ENCODE measurements at regions of chr6 and their contacts with region 1.

Region 1: GRCh38 chr6:1609648-1610496 is at the start of gene FOXC1:
- DNase-seq: peak; percentile 89 to 93 (median 90)
- ATAC-seq: peak; percentile 84 to 92 (median 90)
- H3K4me3 ChIP-seq: peak within 1 kb of the TSS; percentile 53 to 89 (median 69)
- H3K27ac ChIP-seq: peak within 1 kb of the TSS; percentile 75 to 95 (median 88)
- H3K4me1 ChIP-seq: peaks cover 0 to 55% (median 6%) of the 10 kb centered on the region in 12 donors
- H3K27me3 ChIP-seq: peaks cover 28 to 90% (median 65%) of the 10 kb centered on the region in 9 donors
- CTCF ChIP-seq: no peak
- POLR2A ChIP-seq: peak in 1 of 2 donors; percentile 81
- total RNA-seq, gene FOXC1: 1.8 to 6.3 (median 3.5) TPM

Region 2: GRCh38 chr6:1004885-1005630 is 604.8 kb before region 1 on chr6:
- intact Hi-C with region 1: no loop called
- DNase-seq: no peak
- ATAC-seq: no peak
- H3K4me3 ChIP-seq: no peak overlapping the region
- H3K27ac ChIP-seq: no peak overlapping the region
- H3K4me1 ChIP-seq: no peaks in the 10 kb centered on the region
- H3K27me3 ChIP-seq: no peaks in the 10 kb centered on the region
- CTCF ChIP-seq: no peak
- POLR2A ChIP-seq: no peak

Region 3: GRCh38 chr6:1179571-1180459 is 430.1 kb before region 1 on chr6:
- intact Hi-C with region 1: no loop called
- DNase-seq: no peak
- ATAC-seq: no peak
- H3K4me3 ChIP-seq: no peak overlapping the region
- H3K27ac ChIP-seq: no peak overlapping the region
- H3K4me1 ChIP-seq: no peaks in the 10 kb centered on the region
- H3K27me3 ChIP-seq: peaks cover 0 to 20% (median under 1%) of the 10 kb centered on the region in 9 donors
- CTCF ChIP-seq: no peak
- POLR2A ChIP-seq: no peak

Region 4: DNA sequence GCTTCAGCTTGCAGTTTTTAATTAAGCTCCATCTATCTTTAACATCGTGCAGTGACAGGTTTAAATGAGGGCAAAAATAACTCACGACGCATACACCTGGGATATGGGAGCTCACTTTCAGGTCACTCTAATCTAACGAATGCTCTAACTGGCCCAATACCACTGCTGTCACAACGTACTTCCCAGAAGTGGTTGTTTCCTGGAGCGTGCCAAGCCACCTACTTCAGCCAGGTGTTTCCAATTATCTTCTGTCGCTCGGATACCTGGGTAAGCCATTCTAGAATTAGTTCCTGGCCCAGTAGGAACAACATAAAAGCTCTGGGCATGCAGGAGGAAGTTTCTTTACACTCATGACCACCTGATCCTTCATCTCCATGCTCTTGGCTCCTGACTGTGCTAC is 147.3 kb after region 1 on chr6:
- intact Hi-C with region 1: loop called in 1 of 10 experiments (anchors 5 kb)
- DNase-seq: no peak
- ATAC-seq: no peak
- H3K4me3 ChIP-seq: no peak overlapping the region
- H3K27ac ChIP-seq: peak overlapping the region in 2 of 12 donors; percentile 14 to 44
- H3K4me1 ChIP-seq: no peaks in the 10 kb centered on the region
- H3K27me3 ChIP-seq: no peaks in the 10 kb centered on the region
- CTCF ChIP-seq: no peak
- POLR2A ChIP-seq: no peak

Region 5: GRCh38 chr6:1832836-1833787 is 223.2 kb after region 1 on chr6:
- intact Hi-C with region 1: loop called in 2 of 10 experiments (anchors 10 kb)
- DNase-seq: peak; percentile 49 to 71 (median 60)
- ATAC-seq: peak; percentile 37 to 89 (median 78)
- H3K4me3 ChIP-seq: peak overlapping the region in 6 of 12 donors; percentile 12 to 33 (median 20)
- H3K27ac ChIP-seq: peak overlapping the region in 8 of 12 donors; percentile 2 to 34 (median 16)
- H3K4me1 ChIP-seq: peaks cover 0 to 25% (median 0%) of the 10 kb centered on the region in 12 donors
- H3K27me3 ChIP-seq: no peaks in the 10 kb centered on the region
- CTCF ChIP-seq: no peak
- POLR2A ChIP-seq: no peak

Region 6: GRCh38 chr6:2448820-2449571 is 839.1 kb after region 1 on chr6:
- intact Hi-C with region 1: loop called in 2 of 10 experiments (anchors 10 kb)
- DNase-seq: peak in 1 of 5 donors; percentile 30
- ATAC-seq: peak in 3 of 4 donors; percentile 69 to 73 (median 70)
- H3K4me3 ChIP-seq: peak overlapping the region in 1 of 12 donors; percentile 33
- H3K27ac ChIP-seq: no peak overlapping the region
- H3K4me1 ChIP-seq: peaks cover 0 to 12% (median 0%) of the 10 kb centered on the region in 12 donors
- H3K27me3 ChIP-seq: no peaks in the 10 kb centered on the region
- CTCF ChIP-seq: peak; percentile 29 to 72 (median 54)
- POLR2A ChIP-seq: no peak

Measured in heart left ventricle (tissue), 16 donors.